ENCODE measurements at regions of chr2 and their contacts with region 1.

Region 1: GRCh38 chr2:208466151-208466919 is 59.7 kb downstream of the PTH2R start:
- DNase-seq: peak; percentile 54 to 70
- H3K4me3 ChIP-seq: no peak overlapping the region
- H3K4me3 Mint-ChIP-seq: no peak overlapping the region
- H3K27ac Mint-ChIP-seq: no peak overlapping the region
- H3K4me1 ChIP-seq: peaks cover 27% of the 10 kb centered on the region
- H3K4me1 Mint-ChIP-seq: peaks cover 30% of the 10 kb centered on the region
- H3K27me3 ChIP-seq: no peaks in the 10 kb centered on the region
- H3K27me3 Mint-ChIP-seq: no peaks in the 10 kb centered on the region
- CTCF ChIP-seq: peak; percentile 71 to 88

Region 2: DNA sequence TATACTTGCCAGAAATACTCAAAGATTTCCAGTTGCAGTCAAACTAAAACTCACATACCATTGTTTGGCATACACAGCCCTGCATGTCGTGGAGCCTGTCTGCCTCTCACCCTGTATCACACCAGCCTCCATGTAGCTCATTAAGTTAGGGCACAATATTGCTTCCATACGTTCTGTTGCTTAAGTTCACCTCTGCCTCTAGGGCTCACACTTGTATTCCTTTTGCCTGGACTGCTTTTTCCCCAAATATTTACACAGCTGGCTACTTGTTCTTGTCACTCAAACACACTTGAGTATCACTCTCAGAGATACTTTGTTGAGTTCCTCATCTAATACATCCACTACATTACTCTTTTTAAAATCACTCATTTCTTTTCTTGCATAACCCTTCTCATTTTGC is 23.4 kb after region 1 on chr2:
- CTCF ChIA-PET with region 1: interaction called, 6 read pairs
- POLR2A ChIA-PET with region 1: no interaction called
- intact Hi-C with region 1: loop called (anchors 1 kb)
- DNase-seq: peak in 1 of 2 experiments; percentile 49
- H3K4me3 ChIP-seq: no peak overlapping the region
- H3K4me3 Mint-ChIP-seq: peak overlapping the region; percentile 22
- H3K27ac Mint-ChIP-seq: peak overlapping the region; percentile 16
- H3K4me1 ChIP-seq: peaks cover 32% of the 10 kb centered on the region
- H3K4me1 Mint-ChIP-seq: peaks cover 36% of the 10 kb centered on the region
- H3K27me3 ChIP-seq: no peaks in the 10 kb centered on the region
- H3K27me3 Mint-ChIP-seq: no peaks in the 10 kb centered on the region
- CTCF ChIP-seq: peak in 1 of 2 experiments; percentile 34

Region 3: DNA sequence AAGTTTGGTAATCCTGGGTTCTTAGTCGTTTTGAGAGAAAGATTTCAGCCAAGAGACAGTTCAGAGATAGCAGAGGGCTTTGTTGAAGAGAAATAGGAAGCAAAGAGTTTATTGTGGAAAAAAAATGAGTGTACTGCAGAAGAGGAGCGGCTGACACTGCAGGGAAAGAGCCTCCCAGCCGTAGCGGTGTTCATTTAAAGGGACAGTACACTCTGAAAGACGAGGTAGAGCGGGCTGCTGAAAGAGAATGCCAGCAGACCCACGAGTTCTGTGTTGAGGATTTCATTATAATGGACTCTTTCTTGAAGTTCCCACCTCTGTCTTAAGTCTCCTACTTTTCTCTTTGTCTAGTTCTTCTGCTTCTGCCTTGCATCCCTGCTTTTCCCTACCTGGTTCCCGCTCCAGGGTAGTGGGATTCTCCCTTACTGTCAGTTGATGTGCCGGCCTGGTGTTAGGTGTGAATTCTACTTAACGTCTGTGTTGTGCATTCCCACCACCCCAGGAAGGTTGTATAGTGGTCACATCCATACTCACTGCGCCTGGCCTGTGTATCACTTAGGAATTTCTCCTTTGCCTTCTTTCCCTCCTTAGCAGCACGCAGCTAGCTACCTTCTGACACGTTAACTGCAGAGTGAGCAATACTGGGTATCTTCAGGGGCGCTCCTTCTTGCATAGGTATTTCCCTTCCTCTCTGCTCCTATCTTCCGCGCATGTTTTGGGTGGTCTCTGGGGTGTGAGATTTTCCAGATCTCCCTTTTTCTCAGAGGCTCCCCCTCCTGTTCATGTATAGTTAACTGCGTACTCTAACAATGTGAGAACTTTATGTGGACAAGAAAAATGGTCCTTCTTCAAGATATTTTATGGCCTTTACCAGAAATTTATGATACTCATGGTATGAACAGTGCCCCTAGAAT is 104.8 kb after region 1 on chr2:
- CTCF ChIA-PET with region 1: no interaction called
- POLR2A ChIA-PET with region 1: no interaction called
- intact Hi-C with region 1: loop called (anchors 1 kb)
- DNase-seq: peak in 1 of 2 experiments; percentile 9
- H3K4me3 ChIP-seq: no peak overlapping the region
- H3K4me3 Mint-ChIP-seq: peak overlapping the region; percentile 38
- H3K27ac Mint-ChIP-seq: no peak overlapping the region
- H3K4me1 ChIP-seq: peaks cover 3% of the 10 kb centered on the region; the same call in 1 of the 2 replicates
- H3K4me1 Mint-ChIP-seq: peaks cover 18% of the 10 kb centered on the region
- H3K27me3 ChIP-seq: no peaks in the 10 kb centered on the region
- H3K27me3 Mint-ChIP-seq: no peaks in the 10 kb centered on the region
- CTCF ChIP-seq: peak; percentile 31 to 33

Region 4: GRCh38 chr2:208638059-208638797 is 171.9 kb after region 1 on chr2:
- CTCF ChIA-PET with region 1: no interaction called
- POLR2A ChIA-PET with region 1: no interaction called
- intact Hi-C with region 1: loop called (anchors 1 kb)
- DNase-seq: peak; percentile 72 to 73
- H3K4me3 ChIP-seq: no peak overlapping the region
- H3K4me3 Mint-ChIP-seq: peak overlapping the region; percentile 34
- H3K27ac Mint-ChIP-seq: peak overlapping the region; percentile 58
- H3K4me1 ChIP-seq: peaks cover 14% of the 10 kb centered on the region
- H3K4me1 Mint-ChIP-seq: peaks cover 25% of the 10 kb centered on the region
- H3K27me3 ChIP-seq: no peaks in the 10 kb centered on the region
- H3K27me3 Mint-ChIP-seq: no peaks in the 10 kb centered on the region
- CTCF ChIP-seq: no peak

Region 5: DNA sequence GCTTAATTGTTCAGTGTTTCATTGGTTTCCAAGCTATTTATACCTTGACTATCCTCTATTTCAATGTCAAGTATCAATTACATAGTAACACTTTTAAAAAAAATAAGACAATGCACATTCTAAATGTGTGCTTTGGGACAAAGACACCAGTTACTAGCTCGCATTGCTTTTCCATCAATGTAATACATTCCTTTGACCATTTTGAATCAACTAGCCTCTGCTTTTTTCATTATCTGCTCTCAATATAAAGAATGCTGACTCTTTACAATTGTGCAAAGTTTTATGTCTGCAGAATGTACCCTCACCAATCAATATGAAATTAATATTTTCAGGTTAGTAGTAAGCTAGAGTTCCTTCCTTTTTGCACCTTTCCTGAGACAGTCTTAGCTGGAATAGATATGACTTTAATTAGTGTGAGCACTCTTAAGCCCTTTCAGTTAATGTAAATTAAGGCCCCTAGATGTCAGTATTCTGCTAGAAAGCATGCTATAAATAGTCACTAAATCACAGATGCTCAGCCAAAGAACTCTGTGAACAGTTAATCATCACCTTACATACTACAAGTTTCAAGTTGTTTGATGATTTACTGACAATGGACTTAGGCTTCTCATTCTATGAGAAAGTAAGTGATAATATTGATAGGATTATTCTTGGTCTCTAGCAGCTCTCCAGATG is 353.8 kb after region 1 on chr2:
- CTCF ChIA-PET with region 1: no interaction called
- POLR2A ChIA-PET with region 1: no interaction called
- intact Hi-C with region 1: loop called (anchors 2 kb)
- DNase-seq: peak in 1 of 2 experiments; percentile 13
- H3K4me3 ChIP-seq: no peak overlapping the region
- H3K4me3 Mint-ChIP-seq: no peak overlapping the region
- H3K27ac Mint-ChIP-seq: no peak overlapping the region
- H3K4me1 ChIP-seq: no peaks in the 10 kb centered on the region
- H3K4me1 Mint-ChIP-seq: no peaks in the 10 kb centered on the region
- H3K27me3 ChIP-seq: no peaks in the 10 kb centered on the region
- H3K27me3 Mint-ChIP-seq: no peaks in the 10 kb centered on the region
- CTCF ChIP-seq: peak; percentile 27 to 39

Region 6: GRCh38 chr2:209208211-209208610 is 741.9 kb after region 1 on chr2:
- CTCF ChIA-PET with region 1: no interaction called
- POLR2A ChIA-PET with region 1: no interaction called
- intact Hi-C with region 1: loop called (anchors 1 kb)
- DNase-seq: peak; percentile 44 to 45
- H3K4me3 ChIP-seq: no peak overlapping the region
- H3K4me3 Mint-ChIP-seq: no peak overlapping the region
- H3K27ac Mint-ChIP-seq: no peak overlapping the region
- H3K4me1 ChIP-seq: no peaks in the 10 kb centered on the region
- H3K4me1 Mint-ChIP-seq: no peaks in the 10 kb centered on the region
- H3K27me3 ChIP-seq: no peaks in the 10 kb centered on the region
- H3K27me3 Mint-ChIP-seq: peaks cover 3% of the 10 kb centered on the region
- CTCF ChIP-seq: peak; percentile 57 to 65